H1 (cell line): ENCODE measurements at regions of chr7 and their contacts with region 1.

Region 1: DNA sequence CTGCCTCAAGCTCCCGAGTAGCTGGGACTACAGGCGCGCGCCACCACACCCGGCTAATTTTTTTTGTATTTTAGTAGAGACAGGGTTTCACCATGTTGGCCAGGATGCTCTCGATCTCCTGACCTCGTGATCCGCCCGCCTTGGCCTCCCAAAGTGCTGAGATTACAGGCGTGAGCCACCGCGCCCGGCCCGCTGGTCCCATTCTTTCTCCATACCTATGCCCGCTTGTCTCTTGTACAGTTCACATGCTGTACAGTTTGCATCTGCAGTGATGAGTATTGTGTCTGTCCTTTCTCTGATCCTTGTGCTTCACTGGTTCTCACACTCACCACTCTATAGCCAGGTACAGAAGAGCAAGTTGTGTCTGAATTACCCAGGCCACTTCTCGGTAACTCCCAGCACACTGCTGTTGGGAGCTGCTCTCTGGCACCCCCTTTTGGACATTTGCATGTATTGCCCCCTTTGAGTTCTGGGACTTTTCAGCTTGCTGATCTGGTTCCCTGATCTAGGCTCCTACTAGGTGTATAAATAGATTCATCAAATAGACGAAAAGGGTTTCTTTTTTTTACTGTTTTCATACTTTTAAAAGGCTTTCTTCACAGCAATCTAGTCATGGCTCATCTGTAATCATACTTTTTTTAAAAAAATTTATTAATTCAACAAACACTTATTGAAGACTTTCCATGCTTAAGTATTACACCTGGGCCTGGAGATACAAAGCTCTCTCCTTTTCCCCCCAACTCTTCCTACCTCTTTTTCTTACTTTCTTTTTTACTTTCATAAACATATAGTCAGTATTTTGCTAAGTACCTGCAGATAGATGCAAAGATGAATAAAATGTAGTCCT is 53.5 kb downstream of the AOAH start:
- DNase-seq: peak in 1 of 2 experiments; percentile 81
- H3K4me3 ChIP-seq: no peak overlapping the region
- H3K27ac ChIP-seq: no peak overlapping the region
- H3K4me1 ChIP-seq: no peaks in the 10 kb centered on the region
- H3K27me3 ChIP-seq: no peaks in the 10 kb centered on the region
- CTCF ChIP-seq: peak; percentile 81 to 93 (median 91)
- EP300 ChIP-seq: no peak
- POLR2A ChIP-seq: no peak
- RAD21 ChIP-seq: peak; percentile 93

Region 2: DNA sequence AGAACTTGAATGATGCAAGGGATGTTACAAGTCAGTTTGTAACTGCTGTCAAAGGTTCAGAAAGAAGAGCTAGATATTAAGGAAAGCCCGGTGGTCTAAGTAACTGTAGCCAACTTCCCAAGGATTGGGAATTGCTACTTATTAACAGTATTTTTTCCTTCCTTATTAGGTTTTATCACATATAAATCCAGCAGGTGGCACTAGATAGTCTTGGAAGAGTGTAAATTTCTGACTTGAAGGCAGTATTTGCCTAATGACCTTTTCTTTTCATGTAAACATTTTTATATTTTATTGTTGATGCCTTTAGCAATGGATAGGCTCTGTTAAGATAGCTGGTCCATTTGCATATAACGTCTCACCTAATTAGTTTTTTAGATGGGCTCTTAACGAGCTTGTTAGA is 229.9 kb before region 1 on chr7:
- CTCF ChIA-PET with region 1: interaction called, 14 read pairs
- POLR2A ChIA-PET with region 1: no interaction called
- DNase-seq: no peak
- H3K4me3 ChIP-seq: no peak overlapping the region
- H3K27ac ChIP-seq: no peak overlapping the region
- H3K4me1 ChIP-seq: peaks cover 0 to 4% (median 0%) of the 10 kb centered on the region in 4 experiments; a peak in 2 of 7 replicates
- H3K27me3 ChIP-seq: no peaks in the 10 kb centered on the region
- CTCF ChIP-seq: peak in 1 of 3 experiments; percentile 45; a peak in 2 of 4 replicates
- EP300 ChIP-seq: no peak
- POLR2A ChIP-seq: no peak
- RAD21 ChIP-seq: peak in 1 of 2 experiments; percentile 33; a peak in 3 of 4 replicates

Region 3: GRCh38 chr7:36487756-36488336 is 183.0 kb before region 1 on chr7:
- CTCF ChIA-PET with region 1: interaction called, 104 read pairs
- POLR2A ChIA-PET with region 1: no interaction called
- DNase-seq: no peak
- H3K4me3 ChIP-seq: no peak overlapping the region
- H3K27ac ChIP-seq: no peak overlapping the region
- H3K4me1 ChIP-seq: no peaks in the 10 kb centered on the region
- H3K27me3 ChIP-seq: no peaks in the 10 kb centered on the region
- CTCF ChIP-seq: peak in 2 of 3 experiments; percentile 69 to 78; a peak in 3 of 4 replicates
- EP300 ChIP-seq: no peak
- POLR2A ChIP-seq: no peak
- RAD21 ChIP-seq: peak; percentile 96

Region 4: DNA sequence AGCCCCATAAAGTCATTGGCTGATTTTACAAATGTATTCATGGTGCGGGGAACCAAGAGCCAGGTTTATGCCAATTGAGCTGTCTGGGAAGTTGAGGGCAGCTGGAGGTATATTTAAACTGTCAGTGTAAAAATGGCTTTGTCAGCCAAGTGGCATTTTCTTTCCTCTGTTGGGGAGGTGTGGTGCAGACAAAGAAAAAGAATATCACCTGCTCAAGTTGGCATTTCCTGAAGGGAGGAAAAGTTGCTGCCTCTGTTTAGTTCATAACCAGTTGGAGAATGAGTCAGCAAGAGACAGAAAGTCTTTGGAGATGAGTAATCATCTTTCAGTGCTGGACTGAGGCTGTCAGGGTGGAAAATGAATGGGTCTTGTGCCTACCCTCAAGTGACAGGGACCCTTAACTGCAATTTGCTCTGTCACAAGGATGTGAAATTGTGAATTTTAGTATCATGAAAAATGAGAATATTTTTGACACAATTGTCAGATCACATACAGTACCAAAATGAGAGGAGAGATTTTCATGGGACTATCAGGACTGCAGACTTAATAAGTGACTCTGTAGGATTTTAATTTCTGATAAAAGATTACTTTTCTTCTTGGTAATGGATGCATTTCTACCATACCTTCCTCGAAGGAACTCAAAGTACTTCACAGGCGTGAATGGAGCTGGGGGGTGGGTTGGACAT is 143.8 kb before region 1 on chr7:
- CTCF ChIA-PET with region 1: interaction called, 12 read pairs
- POLR2A ChIA-PET with region 1: no interaction called
- DNase-seq: no peak
- H3K4me3 ChIP-seq: no peak overlapping the region
- H3K27ac ChIP-seq: no peak overlapping the region
- H3K4me1 ChIP-seq: peaks cover 0 to 4% (median 0%) of the 10 kb centered on the region in 4 experiments; a peak in 1 of 7 replicates
- H3K27me3 ChIP-seq: no peaks in the 10 kb centered on the region
- CTCF ChIP-seq: no peak
- EP300 ChIP-seq: no peak
- POLR2A ChIP-seq: no peak
- RAD21 ChIP-seq: no peak

Region 5: GRCh38 chr7:36606976-36607720 is 63.7 kb before region 1 on chr7:
- CTCF ChIA-PET with region 1: interaction called, 16 read pairs
- POLR2A ChIA-PET with region 1: no interaction called
- DNase-seq: no peak
- H3K4me3 ChIP-seq: no peak overlapping the region
- H3K27ac ChIP-seq: no peak overlapping the region
- H3K4me1 ChIP-seq: peaks cover 0 to 5% (median 0%) of the 10 kb centered on the region in 4 experiments; a peak in 3 of 7 replicates
- H3K27me3 ChIP-seq: no peaks in the 10 kb centered on the region
- CTCF ChIP-seq: no peak
- EP300 ChIP-seq: no peak
- POLR2A ChIP-seq: no peak
- RAD21 ChIP-seq: no peak

Region 6: DNA sequence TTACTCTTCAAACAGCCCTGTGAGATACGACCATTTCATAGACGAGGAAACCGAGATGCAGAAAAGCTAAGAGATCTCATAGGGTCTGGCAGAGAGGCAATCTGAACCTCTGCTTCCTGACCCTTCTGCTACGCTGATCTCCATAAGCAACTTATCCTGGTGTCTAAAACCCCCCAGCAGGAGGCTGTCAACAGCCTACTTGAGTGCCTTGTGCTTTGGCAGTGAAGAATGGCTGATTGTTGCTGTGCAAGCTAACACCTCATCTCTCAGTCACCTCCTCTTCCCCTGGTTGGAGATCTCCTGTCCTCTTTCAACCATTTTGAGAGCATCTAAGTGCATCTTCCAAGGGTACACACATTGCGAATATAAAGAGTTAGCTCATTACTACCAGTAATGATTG is 32.7 kb before region 1 on chr7:
- CTCF ChIA-PET with region 1: interaction called, 17 read pairs
- POLR2A ChIA-PET with region 1: no interaction called
- DNase-seq: no peak
- H3K4me3 ChIP-seq: no peak overlapping the region
- H3K27ac ChIP-seq: no peak overlapping the region
- H3K4me1 ChIP-seq: peaks cover 4 to 11% (median 6%) of the 10 kb centered on the region in 4 experiments; a peak in 6 of 7 replicates
- H3K27me3 ChIP-seq: no peaks in the 10 kb centered on the region
- CTCF ChIP-seq: peak in 1 of 3 experiments; percentile 5; a peak in 1 of 4 replicates
- EP300 ChIP-seq: no peak
- POLR2A ChIP-seq: no peak
- RAD21 ChIP-seq: no peak; a peak in 1 of 4 replicates

Region 7: GRCh38 chr7:36659172-36659516 is 11.7 kb before region 1 on chr7:
- CTCF ChIA-PET with region 1: interaction called, 30 read pairs
- POLR2A ChIA-PET with region 1: interaction called, 3 read pairs
- DNase-seq: no peak
- H3K4me3 ChIP-seq: no peak overlapping the region
- H3K27ac ChIP-seq: peak overlapping the region; percentile 43; the same call in 1 of the 2 replicates
- H3K4me1 ChIP-seq: peaks cover 7 to 28% (median 26%) of the 10 kb centered on the region in 4 experiments; a peak in 6 of 7 replicates
- H3K27me3 ChIP-seq: no peaks in the 10 kb centered on the region; a peak in 1 of 7 replicates
- CTCF ChIP-seq: no peak
- EP300 ChIP-seq: no peak
- POLR2A ChIP-seq: no peak
- RAD21 ChIP-seq: no peak